ENCODE measurements at regions of chr3 and their contacts with region 1.

Region 1: DNA sequence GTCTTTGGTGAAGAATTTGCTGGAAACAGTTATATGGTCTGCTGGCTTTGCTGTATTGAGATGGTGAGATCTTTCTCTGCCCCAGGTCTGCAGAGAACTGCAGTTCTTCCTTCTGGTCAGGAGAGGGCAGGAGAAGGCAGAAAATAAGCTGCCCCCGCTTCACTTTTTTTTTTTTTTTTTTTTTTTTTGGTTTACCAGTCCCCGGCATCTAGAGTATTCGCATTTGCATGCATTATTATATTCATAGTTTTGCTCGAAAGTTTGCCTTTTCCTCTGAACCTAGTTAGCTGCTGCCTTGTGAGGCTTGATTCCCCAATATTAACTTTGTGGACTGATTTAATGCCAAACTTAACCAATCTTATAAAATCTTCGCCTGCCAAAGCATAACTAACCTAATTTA is 10.6 kb upstream of the PARL start:
- DNase-seq: peak; percentile 38
- ATAC-seq: peak; percentile 76
- H3K4me3 ChIP-seq: no peak overlapping the region
- H3K27ac ChIP-seq: no peak overlapping the region
- H3K4me1 ChIP-seq: no peaks in the 10 kb centered on the region
- H3K27me3 ChIP-seq: no peaks in the 10 kb centered on the region
- CTCF ChIP-seq: peak; percentile 77 to 84 (median 82)
- POLR2A ChIP-seq: no peak
- RAD21 ChIP-seq: peak; percentile 92

Region 2: GRCh38 chr3:183555541-183556081 is 339.7 kb before region 1 on chr3 and contains the start of gene KLHL6:
- CTCF ChIA-PET with region 1: no interaction called
- POLR2A ChIA-PET with region 1: no interaction called
- RAD21 ChIA-PET with region 1: no interaction called
- intact Hi-C with region 1: no loop called
- DNase-seq: no peak
- ATAC-seq: no peak
- H3K4me3 ChIP-seq: no peak within 1 kb of the TSS
- H3K27ac ChIP-seq: no peak within 1 kb of the TSS
- H3K4me1 ChIP-seq: no peaks in the 10 kb centered on the region
- H3K27me3 ChIP-seq: no peaks in the 10 kb centered on the region
- CTCF ChIP-seq: no peak
- POLR2A ChIP-seq: no peak
- RAD21 ChIP-seq: no peak
- total RNA-seq, gene KLHL6: 0.15 TPM

Region 3: DNA sequence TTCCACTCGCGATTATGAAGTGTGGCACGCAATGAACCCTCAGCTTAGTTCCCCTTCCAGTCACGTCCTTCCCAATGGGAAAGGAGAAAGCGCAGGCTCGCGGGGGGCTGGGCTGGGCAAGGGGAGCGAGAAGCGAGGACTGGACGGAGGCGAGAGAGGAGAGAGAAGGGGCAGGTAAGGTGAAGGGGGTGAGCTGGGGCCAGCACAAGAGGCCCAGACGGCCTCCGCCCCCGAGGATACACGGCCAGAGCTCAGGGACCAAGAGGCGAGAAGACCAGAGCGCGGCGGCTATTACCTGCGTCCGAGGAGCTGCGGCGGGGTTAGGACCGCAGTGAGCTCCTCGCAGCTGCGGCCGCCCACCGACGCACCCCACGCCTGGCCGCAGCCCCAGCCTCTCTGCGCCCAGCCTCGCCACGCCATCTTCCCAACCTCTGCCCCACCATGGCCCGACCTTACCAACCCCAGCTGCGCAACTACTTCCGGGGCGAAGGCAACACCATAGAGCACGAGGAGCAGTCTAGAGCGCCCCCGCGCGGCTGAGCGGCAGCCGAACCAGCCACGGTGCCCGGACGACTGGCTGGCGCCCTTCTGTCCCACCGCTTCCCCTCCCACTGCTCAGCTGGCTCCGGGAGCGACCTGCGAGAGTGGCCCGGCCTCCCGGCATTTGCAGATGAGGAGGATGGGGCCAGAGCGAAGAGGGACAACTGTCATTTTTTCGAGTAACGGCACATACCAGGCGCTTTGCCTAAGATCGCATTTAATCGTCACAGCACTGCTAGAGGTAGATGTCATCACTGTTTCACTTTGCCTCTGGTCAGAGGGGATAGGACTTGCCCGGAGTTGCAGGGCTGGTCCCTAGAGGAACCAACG is 10.6 kb before region 1 on chr3 and contains the start of gene PARL:
- CTCF ChIA-PET with region 1: interaction called, 10 read pairs
- POLR2A ChIA-PET with region 1: interaction called, 4 read pairs
- RAD21 ChIA-PET with region 1: no interaction called
- intact Hi-C with region 1: no loop called
- DNase-seq: peak; percentile 83
- ATAC-seq: peak; percentile 98
- H3K4me3 ChIP-seq: peak within 1 kb of the TSS; percentile 99 to 100
- H3K27ac ChIP-seq: peak within 1 kb of the TSS; percentile 64
- H3K4me1 ChIP-seq: peaks cover 6 to 16% of the 10 kb centered on the region in 2 experiments; a peak in 3 of 4 replicates
- H3K27me3 ChIP-seq: no peaks in the 10 kb centered on the region
- CTCF ChIP-seq: peak; percentile 79 to 92 (median 90)
- POLR2A ChIP-seq: peak; percentile 64
- RAD21 ChIP-seq: peak; percentile 80
- total RNA-seq, gene PARL: 69.7 TPM

Region 4: GRCh38 chr3:184017672-184018423 is 122.6 kb after region 1 on chr3 and contains the start of gene ABCC5:
- CTCF ChIA-PET with region 1: interaction called, 11 read pairs
- POLR2A ChIA-PET with region 1: no interaction called
- RAD21 ChIA-PET with region 1: no interaction called
- intact Hi-C with region 1: loop called (anchors 1 kb)
- DNase-seq: peak; percentile 70
- ATAC-seq: peak; percentile 97
- H3K4me3 ChIP-seq: peak within 1 kb of the TSS; percentile 83 to 100
- H3K27ac ChIP-seq: peak within 1 kb of the TSS; percentile 71
- H3K4me1 ChIP-seq: peaks cover 4 to 13% of the 10 kb centered on the region in 2 experiments; a peak in 3 of 4 replicates
- H3K27me3 ChIP-seq: no peaks in the 10 kb centered on the region
- CTCF ChIP-seq: peak in 1 of 3 experiments; percentile 31; a peak in 1 of 6 replicates
- POLR2A ChIP-seq: peak; percentile 87
- RAD21 ChIP-seq: no peak
- total RNA-seq, gene ABCC5: 16.9 TPM

Region 5: GRCh38 chr3:184135149-184135910 is 240.0 kb after region 1 on chr3 and contains the start of gene EIF2B5:
- CTCF ChIA-PET with region 1: interaction called, 6 read pairs
- POLR2A ChIA-PET with region 1: no interaction called
- RAD21 ChIA-PET with region 1: no interaction called
- intact Hi-C with region 1: loop called (anchors 5 kb)
- DNase-seq: peak; percentile 89
- ATAC-seq: peak; percentile 79
- H3K4me3 ChIP-seq: peak within 1 kb of the TSS; percentile 89 to 91
- H3K27ac ChIP-seq: peak within 1 kb of the TSS; percentile 71
- H3K4me1 ChIP-seq: peaks cover 9 to 31% of the 10 kb centered on the region in 2 experiments; a peak in 3 of 4 replicates
- H3K27me3 ChIP-seq: no peaks in the 10 kb centered on the region
- CTCF ChIP-seq: peak in 1 of 3 experiments; percentile 41; a peak in 1 of 6 replicates
- POLR2A ChIP-seq: peak; percentile 69
- RAD21 ChIP-seq: no peak
- total RNA-seq, gene EIF2B5: 50.3 TPM

Measured in HCT116 (cell line).